Posterior vena cava (tissue), 2 donors: ENCODE measurements at regions of chr17 and their contacts with region 1.

Region 1: GRCh38 chr17:75904749-75905521 is at the start of gene MRPL38:
- DNase-seq: peak; percentile 96
- total RNA-seq, gene MRPL38: 49.3 to 55.5 TPM

Region 2: GRCh38 chr17:75779231-75779986 is 125.5 kb before region 1 on chr17:
- intact Hi-C with region 1: no loop called
- DNase-seq: peak; percentile 99

Region 3: GRCh38 chr17:75940724-75941441 is 35.9 kb after region 1 on chr17 and contains the start of gene FBF1:
- intact Hi-C with region 1: loop called in 1 of 2 experiments (anchors 1 kb)
- DNase-seq: peak; percentile 98
- total RNA-seq, gene FBF1: 4.5 to 6.8 TPM

Region 4: DNA sequence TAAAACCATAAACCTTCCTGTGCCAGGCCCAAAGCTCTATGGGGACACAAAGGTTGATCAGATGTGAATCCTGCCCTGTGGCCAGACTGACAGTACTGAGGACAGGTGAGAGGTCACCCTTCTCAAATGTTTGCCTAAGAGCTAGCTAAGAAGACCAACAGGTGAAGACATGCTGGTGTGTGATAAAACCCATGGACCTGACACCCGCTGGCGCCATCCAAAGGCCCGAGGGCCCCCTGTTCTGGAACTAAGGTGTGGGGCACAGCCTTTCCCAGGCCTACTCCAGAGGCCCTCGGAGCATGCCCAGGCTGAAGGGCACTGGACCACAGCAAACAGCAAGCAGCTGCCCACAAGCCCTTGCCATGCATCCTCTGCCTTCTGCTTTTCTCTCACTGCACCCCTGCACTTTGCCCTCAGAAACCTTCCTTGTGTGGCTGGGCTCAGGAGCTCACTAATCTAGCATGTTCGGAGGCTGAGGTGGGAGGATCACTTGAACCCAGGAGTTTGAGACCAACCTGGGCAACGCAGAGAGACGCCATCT is 90.5 kb after region 1 on chr17:
- intact Hi-C with region 1: no loop called
- DNase-seq: peak; percentile 43

Region 5: DNA sequence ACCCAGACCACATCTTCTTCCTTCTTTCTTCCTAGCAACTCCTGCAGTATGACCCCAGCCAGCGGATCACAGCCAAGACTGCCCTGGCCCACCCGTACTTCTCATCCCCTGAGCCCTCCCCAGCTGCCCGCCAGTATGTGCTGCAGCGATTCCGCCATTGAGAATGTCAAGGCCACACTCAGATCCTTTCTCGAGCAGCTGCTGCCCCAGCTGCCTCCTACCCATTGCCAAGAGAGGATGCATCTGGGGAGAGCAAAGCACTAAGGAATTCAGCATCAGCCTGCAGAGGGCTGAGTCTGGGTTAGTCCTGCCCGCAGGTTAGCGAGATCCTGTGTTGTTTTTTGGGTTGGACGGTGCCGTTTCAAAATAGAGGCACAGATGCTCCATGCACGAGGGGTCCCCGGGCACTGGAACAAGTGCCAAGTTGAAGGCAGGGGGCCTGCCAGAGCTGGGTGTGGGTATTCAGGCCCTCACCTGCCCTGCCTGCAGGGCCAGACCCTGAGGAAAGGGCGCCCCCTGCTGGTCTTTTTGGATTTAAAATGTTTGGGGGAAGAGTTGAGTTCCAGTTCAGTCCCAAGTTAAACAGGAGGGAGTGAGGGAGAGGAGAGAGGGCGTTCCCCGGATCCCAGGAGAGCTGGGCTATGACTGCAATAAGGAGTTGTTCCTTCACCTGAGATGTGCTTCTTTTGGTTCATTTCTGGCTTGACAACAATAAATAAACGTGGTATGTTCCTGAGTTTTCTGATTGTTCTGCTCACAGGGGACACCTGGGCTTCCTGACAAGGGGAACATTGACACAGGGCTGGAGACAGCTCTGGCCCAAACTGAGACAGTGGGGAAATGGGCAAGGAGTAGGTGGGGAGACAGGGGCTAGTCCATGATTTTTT is 100.6 kb after region 1 on chr17:
- intact Hi-C with region 1: loop called (anchors 5 kb)
- DNase-seq: no peak